Posterior cingulate gyrus (tissue), 11 donors: ENCODE measurements at regions of chr2 and their contacts with region 1.

Region 1: DNA sequence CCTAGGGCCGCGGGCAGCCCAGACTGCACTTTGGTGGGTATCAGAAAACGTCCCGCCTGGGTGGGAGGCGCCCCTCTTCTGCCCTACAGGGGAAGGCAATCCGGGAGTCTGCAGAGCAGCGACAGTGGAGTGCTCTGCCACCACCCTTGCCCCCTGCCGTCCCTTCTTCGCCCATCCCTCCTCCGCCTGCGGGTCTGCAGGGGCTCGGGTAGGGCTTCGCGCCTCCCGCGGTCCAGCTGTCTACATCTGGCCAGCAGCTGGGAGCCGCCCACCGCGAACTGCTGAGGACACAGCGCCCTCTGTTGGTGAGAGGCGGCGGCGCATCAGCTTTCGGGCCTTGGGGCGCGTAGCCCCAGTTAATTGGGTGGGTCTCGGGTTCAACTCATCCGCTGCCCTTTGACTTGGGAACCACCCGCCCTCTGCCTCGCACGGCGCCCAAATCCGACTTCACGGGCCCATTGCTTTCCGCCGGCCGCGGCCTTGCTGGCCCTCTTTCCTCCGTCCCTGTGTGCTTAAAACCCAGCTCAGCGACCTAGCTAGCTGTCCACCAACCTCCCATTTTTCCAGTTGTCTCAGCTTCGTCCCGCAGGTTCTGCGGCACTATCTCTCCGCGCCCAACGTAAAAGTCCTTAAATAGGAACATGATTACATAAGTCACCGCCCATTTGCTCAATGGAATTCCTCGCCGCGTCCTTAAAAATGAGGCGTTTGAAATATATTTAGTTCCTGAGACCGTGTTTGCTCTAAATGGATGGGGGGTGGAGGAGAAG is 17.6 kb downstream of the WNT10A start:
- DNase-seq: peak in 9 of 10 donors; percentile 57 to 96 (median 74)

Region 2: GRCh38 chr2:218733171-218734021 is 164.9 kb before region 1 on chr2:
- intact Hi-C with region 1: no loop called
- DNase-seq: peak in 1 of 10 donors; percentile 31

Region 3: DNA sequence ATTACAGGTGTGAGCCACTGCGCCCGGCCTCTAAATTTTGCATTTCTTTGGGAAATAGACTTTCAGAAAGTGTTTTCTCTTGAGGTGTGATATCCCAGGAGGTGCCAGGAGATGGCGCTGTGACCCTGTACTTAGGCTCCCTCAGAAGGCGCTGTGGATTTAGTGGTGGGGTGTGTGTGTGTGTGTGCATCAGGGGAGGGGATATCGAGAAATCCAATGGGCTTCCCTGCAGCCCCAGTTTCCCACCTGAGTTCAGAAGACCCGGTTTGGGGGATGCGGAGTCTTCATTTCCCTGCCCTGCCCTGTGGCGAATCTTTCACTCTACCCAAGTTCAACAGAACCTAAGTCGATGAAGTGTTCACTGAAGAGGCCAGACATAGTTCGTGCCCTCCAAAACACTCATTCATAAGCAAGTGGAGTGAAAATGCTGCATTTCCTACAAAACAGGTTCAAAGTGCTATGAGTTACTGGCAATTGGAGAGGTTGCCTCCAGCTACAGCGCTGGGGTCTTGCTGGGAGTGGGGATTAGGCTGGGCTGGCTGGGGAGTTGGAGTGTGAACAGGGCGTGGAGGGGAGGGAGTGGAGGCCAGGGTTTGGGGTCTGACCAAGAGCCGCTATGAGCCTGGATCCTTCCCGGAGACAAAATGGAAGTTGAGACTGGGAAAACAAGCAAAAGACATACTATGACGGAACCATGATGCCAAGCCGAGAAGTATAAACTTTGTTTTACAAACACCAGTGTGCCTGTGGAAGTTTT is 45.2 kb before region 1 on chr2:
- intact Hi-C with region 1: loop called (anchors 2 kb)
- DNase-seq: peak in 7 of 10 donors; percentile 60 to 94 (median 65)

Region 4: GRCh38 chr2:218876562-218877219 is 21.6 kb before region 1 on chr2:
- intact Hi-C with region 1: loop called (anchors 1 kb)
- DNase-seq: peak; percentile 46 to 95 (median 80)

Region 5: GRCh38 chr2:218959141-218959731 is 60.9 kb after region 1 on chr2 and contains the start of gene CDK5R2:
- intact Hi-C with region 1: loop called (anchors 5 kb)
- DNase-seq: peak; percentile 66 to 99 (median 92)